Colonic mucosa (tissue), 4 donors: ENCODE measurements at regions of chr6 and their contacts with region 1.

Region 1: GRCh38 chr6:47787620-47788497 is 6.0 kb downstream of the OPN5 start:
- DNase-seq: peak; percentile 49
- H3K4me3 ChIP-seq: no peak overlapping the region
- H3K27ac ChIP-seq: no peak overlapping the region
- H3K4me1 ChIP-seq: no peaks in the 10 kb centered on the region
- H3K27me3 ChIP-seq: no peaks in the 10 kb centered on the region
- CTCF ChIP-seq: peak; percentile 93

Region 2: DNA sequence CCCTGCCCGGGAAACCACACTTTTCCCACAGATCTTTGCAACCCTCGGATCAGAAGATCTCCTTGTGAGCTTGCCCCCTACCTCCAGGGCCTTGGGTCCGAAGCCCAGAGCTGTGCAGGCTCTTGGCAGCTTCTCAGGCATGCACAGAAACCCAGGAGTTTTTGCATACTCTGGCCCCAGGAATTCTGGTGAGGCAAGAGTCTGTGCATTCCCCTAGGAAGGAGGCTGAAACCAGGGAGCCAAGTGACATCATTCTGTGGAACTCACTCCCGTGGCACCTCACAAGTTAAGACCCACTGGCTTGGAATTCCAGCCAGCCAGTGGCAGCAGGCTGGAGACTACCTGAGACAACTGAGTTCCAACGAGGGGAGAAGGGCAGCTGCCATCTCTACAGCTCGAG is 578.2 kb before region 1 on chr6:
- intact Hi-C with region 1: no loop called
- DNase-seq: no peak
- H3K4me3 ChIP-seq: no peak overlapping the region
- H3K27ac ChIP-seq: no peak overlapping the region
- H3K4me1 ChIP-seq: no peaks in the 10 kb centered on the region
- H3K27me3 ChIP-seq: no peaks in the 10 kb centered on the region
- CTCF ChIP-seq: no peak

Region 3: GRCh38 chr6:48765352-48765961 is 977.6 kb after region 1 on chr6:
- intact Hi-C with region 1: loop called (anchors 5 kb)
- DNase-seq: peak; percentile 21
- H3K4me3 ChIP-seq: no peak overlapping the region
- H3K27ac ChIP-seq: no peak overlapping the region
- H3K4me1 ChIP-seq: no peaks in the 10 kb centered on the region
- H3K27me3 ChIP-seq: no peaks in the 10 kb centered on the region
- CTCF ChIP-seq: no peak

Region 4: GRCh38 chr6:49423817-49424216 is 1636.0 kb after region 1 on chr6:
- intact Hi-C with region 1: loop called (anchors 5 kb)
- DNase-seq: no peak
- H3K4me3 ChIP-seq: no peak overlapping the region
- H3K27ac ChIP-seq: no peak overlapping the region
- H3K4me1 ChIP-seq: no peaks in the 10 kb centered on the region
- H3K27me3 ChIP-seq: no peaks in the 10 kb centered on the region
- CTCF ChIP-seq: no peak